PC-9 (cell line): ENCODE measurements at regions of chr4 and their contacts with region 1.

Region 1: GRCh38 chr4:110296892-110297291 is 98.5 kb upstream of the ELOVL6 start:
- DNase-seq: peak in 1 of 2 experiments; percentile 62
- H3K4me3 ChIP-seq: no peak overlapping the region
- H3K27ac ChIP-seq: peak overlapping the region; percentile 38
- H3K4me1 ChIP-seq: peaks cover 15% of the 10 kb centered on the region
- H3K27me3 ChIP-seq: no peaks in the 10 kb centered on the region
- CTCF ChIP-seq: no peak

Region 2: GRCh38 chr4:110184140-110184790 is 112.6 kb before region 1 on chr4:
- CTCF ChIA-PET with region 1: interaction called, 10 read pairs
- POLR2A ChIA-PET with region 1: no interaction called
- intact Hi-C with region 1: no loop called
- DNase-seq: no peak
- H3K4me3 ChIP-seq: no peak overlapping the region
- H3K27ac ChIP-seq: no peak overlapping the region
- H3K4me1 ChIP-seq: no peaks in the 10 kb centered on the region
- H3K27me3 ChIP-seq: no peaks in the 10 kb centered on the region
- CTCF ChIP-seq: no peak

Region 3: DNA sequence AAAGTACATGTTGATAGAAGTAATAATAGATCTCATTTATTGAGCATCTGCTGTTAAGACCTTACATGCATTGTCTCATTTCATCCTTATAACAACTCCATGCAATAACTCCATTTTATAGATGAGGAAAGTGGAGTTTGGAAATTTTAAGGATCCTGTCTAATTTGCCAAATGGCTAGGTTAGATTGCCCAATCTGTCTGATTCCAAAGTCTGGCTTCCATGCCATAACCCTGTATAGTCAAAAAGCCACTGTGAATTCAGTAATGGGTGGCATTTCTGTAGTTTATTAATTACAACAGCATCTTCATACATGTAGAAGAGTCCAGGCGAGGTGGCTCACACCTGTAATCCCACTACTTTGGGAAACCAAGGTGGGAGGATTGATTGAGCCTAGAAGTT is 89.7 kb before region 1 on chr4:
- CTCF ChIA-PET with region 1: no interaction called
- POLR2A ChIA-PET with region 1: no interaction called
- intact Hi-C with region 1: no loop called
- DNase-seq: no peak
- H3K4me3 ChIP-seq: no peak overlapping the region
- H3K27ac ChIP-seq: no peak overlapping the region
- H3K4me1 ChIP-seq: peaks cover 12% of the 10 kb centered on the region; the same call in 1 of the 2 replicates
- H3K27me3 ChIP-seq: no peaks in the 10 kb centered on the region
- CTCF ChIP-seq: no peak

Region 4: DNA sequence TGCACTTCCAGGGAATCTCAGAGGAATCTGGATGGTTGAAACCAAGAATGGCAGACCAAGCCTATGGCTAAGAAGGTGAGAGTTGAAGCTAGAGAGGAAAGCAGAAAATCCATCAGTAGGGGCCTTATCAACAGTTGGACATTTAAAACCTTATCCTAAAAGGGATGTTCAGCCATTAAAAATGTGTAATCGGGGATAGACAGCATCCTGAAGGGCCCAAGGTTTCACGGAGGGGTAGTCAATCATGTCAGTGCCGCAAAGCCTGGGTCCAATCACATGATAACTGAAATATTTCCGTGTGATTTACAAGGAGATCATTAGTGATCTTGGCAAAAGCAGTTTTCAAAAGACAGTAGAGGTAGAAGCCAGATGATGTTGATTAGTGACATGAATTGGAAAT is 36.6 kb before region 1 on chr4:
- CTCF ChIA-PET with region 1: no interaction called
- POLR2A ChIA-PET with region 1: interaction called, 12 read pairs
- intact Hi-C with region 1: no loop called
- DNase-seq: no peak
- H3K4me3 ChIP-seq: no peak overlapping the region
- H3K27ac ChIP-seq: no peak overlapping the region
- H3K4me1 ChIP-seq: no peaks in the 10 kb centered on the region
- H3K27me3 ChIP-seq: no peaks in the 10 kb centered on the region
- CTCF ChIP-seq: no peak